ENCODE measurements at regions of chr3 and their contacts with region 1.

Region 1: GRCh38 chr3:149129326-149130205 is at the start of gene HPS3:
- DNase-seq: peak; percentile 95
- H3K4me3 ChIP-seq: peak within 1 kb of the TSS; percentile 61 to 99 (median 89)
- H3K27ac ChIP-seq: peak within 1 kb of the TSS; percentile 77 to 93 (median 86)
- H3K4me1 ChIP-seq: peaks cover 0 to 44% (median 31%) of the 10 kb centered on the region in 4 donors
- H3K27me3 ChIP-seq: no peaks in the 10 kb centered on the region
- CTCF ChIP-seq: no peak
- EP300 ChIP-seq: no peak
- POLR2A ChIP-seq: peak; percentile 82 to 87
- total RNA-seq, gene HPS3: 14.8 to 25.3 (median 16.4) TPM

Region 2: GRCh38 chr3:148930752-148931151 is 198.8 kb before region 1 on chr3:
- intact Hi-C with region 1: no loop called
- DNase-seq: no peak
- H3K4me3 ChIP-seq: no peak overlapping the region
- H3K27ac ChIP-seq: no peak overlapping the region
- H3K4me1 ChIP-seq: no peaks in the 10 kb centered on the region
- H3K27me3 ChIP-seq: no peaks in the 10 kb centered on the region
- CTCF ChIP-seq: no peak
- EP300 ChIP-seq: no peak
- POLR2A ChIP-seq: no peak

Region 3: GRCh38 chr3:149104516-149104915 is 25.1 kb before region 1 on chr3:
- intact Hi-C with region 1: no loop called
- DNase-seq: no peak
- H3K4me3 ChIP-seq: no peak overlapping the region
- H3K27ac ChIP-seq: no peak overlapping the region
- H3K4me1 ChIP-seq: no peaks in the 10 kb centered on the region
- H3K27me3 ChIP-seq: no peaks in the 10 kb centered on the region
- CTCF ChIP-seq: no peak
- EP300 ChIP-seq: no peak
- POLR2A ChIP-seq: no peak

Region 4: DNA sequence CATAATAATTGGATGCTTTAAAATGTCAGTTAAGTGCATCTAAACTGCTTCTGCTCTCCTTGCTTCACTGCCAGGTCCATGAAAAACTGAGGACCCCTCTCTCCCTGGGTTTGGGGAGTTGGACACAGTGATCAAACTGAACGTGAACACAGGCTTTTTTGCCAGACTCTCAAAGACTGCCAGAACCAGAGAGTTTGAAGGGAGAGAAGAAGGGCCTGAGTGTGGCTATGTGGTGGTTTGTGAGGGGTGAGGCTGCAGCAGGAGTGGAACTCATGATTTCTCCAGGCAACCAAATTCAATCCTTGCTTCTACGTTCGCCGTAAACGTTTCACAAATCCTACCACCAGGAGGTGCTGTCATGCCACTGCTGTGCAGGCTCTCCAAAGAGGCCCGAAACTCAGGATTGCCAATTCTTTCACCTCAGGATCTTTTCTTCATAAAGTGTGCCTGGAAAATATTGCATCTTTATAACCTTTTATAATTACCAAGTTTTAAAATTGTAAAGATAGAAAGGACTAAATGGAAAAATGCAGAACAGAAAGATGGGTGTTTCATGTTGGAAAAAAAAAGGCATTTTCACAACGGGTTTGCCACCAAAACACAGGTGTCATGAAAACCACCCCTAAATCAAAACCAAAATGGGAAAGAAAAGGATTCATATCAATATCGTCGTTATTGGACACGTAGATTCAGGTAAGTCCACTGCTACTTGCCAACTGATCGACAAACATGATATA is 364.6 kb after region 1 on chr3:
- intact Hi-C with region 1: loop called (anchors 10 kb)
- DNase-seq: peak; percentile 80
- H3K4me3 ChIP-seq: no peak overlapping the region
- H3K27ac ChIP-seq: no peak overlapping the region
- H3K4me1 ChIP-seq: no peaks in the 10 kb centered on the region
- H3K27me3 ChIP-seq: no peaks in the 10 kb centered on the region
- CTCF ChIP-seq: peak; percentile 68 to 81 (median 76)
- EP300 ChIP-seq: no peak
- POLR2A ChIP-seq: no peak

Measured in sigmoid colon (tissue), 7 donors.